ENCODE measurements at regions of chr10 and their contacts with region 1.

Region 1: GRCh38 chr10:92573798-92574547 is at the start of gene IDE:
- DNase-seq: peak; percentile 66
- H3K4me3 ChIP-seq: peak within 1 kb of the TSS; percentile 90
- H3K27ac ChIP-seq: peak within 1 kb of the TSS; percentile 98
- H3K27me3 ChIP-seq: no peaks in the 10 kb centered on the region
- CTCF ChIP-seq: peak; percentile 81
- polyA plus RNA-seq, gene IDE: 31.2 and 39.0 TPM in 2 replicates

Region 2: DNA sequence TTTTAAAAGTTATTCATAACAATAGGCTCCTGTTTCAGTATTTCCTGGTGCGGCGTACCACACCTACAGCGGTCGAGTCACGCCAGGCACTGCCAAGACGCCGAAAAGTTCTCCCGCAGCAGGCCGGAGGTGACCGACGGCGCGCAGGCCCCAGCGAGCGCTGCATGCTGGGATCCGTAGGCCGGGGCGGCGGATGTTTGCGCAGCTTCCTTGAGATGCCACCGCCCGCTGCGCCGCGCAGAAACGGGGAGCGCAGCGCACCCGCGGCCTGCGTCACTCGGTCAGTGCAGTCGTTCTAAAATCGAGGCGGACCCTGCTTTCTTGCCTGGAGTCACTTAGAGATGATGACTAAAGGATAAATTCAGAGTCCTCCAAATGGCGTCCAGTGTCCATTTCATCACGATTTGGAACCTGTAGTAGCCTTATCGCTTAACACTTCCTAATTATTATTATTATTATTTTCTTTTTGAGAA is 17.6 kb after region 1 on chr10:
- CTCF ChIA-PET with region 1: interaction called, 14 read pairs
- POLR2A ChIA-PET with region 1: interaction called, 11 read pairs
- DNase-seq: peak; percentile 73
- H3K4me3 ChIP-seq: peak overlapping the region; percentile 48
- H3K27ac ChIP-seq: peak overlapping the region; percentile 84
- H3K27me3 ChIP-seq: no peaks in the 10 kb centered on the region
- CTCF ChIP-seq: no peak